BJ (cell line): ENCODE measurements at regions of chr12 and their contacts with region 1.

Region 1: GRCh38 chr12:119931402-119931801 is 54.3 kb upstream of the CIT start:
- DNase-seq: no peak
- H3K4me3 ChIP-seq: no peak overlapping the region
- H3K27me3 ChIP-seq: no peaks in the 10 kb centered on the region
- CTCF ChIP-seq: no peak

Region 2: GRCh38 chr12:119808441-119808840 is 123.0 kb before region 1 on chr12:
- CTCF ChIA-PET with region 1: no interaction called
- POLR2A ChIA-PET with region 1: no interaction called
- DNase-seq: no peak
- H3K4me3 ChIP-seq: no peak overlapping the region
- H3K27me3 ChIP-seq: no peaks in the 10 kb centered on the region
- CTCF ChIP-seq: no peak

Region 3: GRCh38 chr12:119946217-119946616 is 14.8 kb after region 1 on chr12:
- CTCF ChIA-PET with region 1: interaction called, 4 read pairs
- POLR2A ChIA-PET with region 1: interaction called, 13 read pairs
- DNase-seq: no peak
- H3K4me3 ChIP-seq: no peak overlapping the region
- H3K27me3 ChIP-seq: peaks cover 2% of the 10 kb centered on the region; the same call in 1 of the 2 replicates
- CTCF ChIP-seq: no peak